ENCODE measurements at regions of chr7 and their contacts with region 1.

Region 1: GRCh38 chr7:30938435-30939316 is 25.1 kb upstream of the GHRHR start:
- DNase-seq: peak; percentile 32
- ATAC-seq: peak; percentile 93
- H3K4me3 ChIP-seq: no peak overlapping the region
- H3K27ac ChIP-seq: no peak overlapping the region
- H3K4me1 ChIP-seq: no peaks in the 10 kb centered on the region
- H3K27me3 ChIP-seq: no peaks in the 10 kb centered on the region; a peak in 1 of 4 replicates
- CTCF ChIP-seq: peak; percentile 92 to 99 (median 95); a peak in 5 of 6 replicates
- EP300 ChIP-seq: no peak
- POLR2A ChIP-seq: no peak
- RAD21 ChIP-seq: peak; percentile 46; the same call in 1 of the 2 replicates

Region 2: GRCh38 chr7:30800785-30801252 is 137.9 kb before region 1 on chr7:
- CTCF ChIA-PET with region 1: interaction called, 9 read pairs
- POLR2A ChIA-PET with region 1: no interaction called
- RAD21 ChIA-PET with region 1: interaction called, 3 read pairs
- SMC1A ChIA-PET with region 1: interaction called, 10 read pairs
- in situ Hi-C with region 1: no loop called
- intact Hi-C with region 1: no loop called
- DNase-seq: peak; percentile 21
- ATAC-seq: peak; percentile 77
- H3K4me3 ChIP-seq: no peak overlapping the region
- H3K27ac ChIP-seq: no peak overlapping the region
- H3K4me1 ChIP-seq: peaks cover 18% of the 10 kb centered on the region
- H3K27me3 ChIP-seq: no peaks in the 10 kb centered on the region
- CTCF ChIP-seq: peak; percentile 60 to 91 (median 73)
- EP300 ChIP-seq: no peak
- POLR2A ChIP-seq: no peak
- RAD21 ChIP-seq: peak; percentile 83

Region 3: DNA sequence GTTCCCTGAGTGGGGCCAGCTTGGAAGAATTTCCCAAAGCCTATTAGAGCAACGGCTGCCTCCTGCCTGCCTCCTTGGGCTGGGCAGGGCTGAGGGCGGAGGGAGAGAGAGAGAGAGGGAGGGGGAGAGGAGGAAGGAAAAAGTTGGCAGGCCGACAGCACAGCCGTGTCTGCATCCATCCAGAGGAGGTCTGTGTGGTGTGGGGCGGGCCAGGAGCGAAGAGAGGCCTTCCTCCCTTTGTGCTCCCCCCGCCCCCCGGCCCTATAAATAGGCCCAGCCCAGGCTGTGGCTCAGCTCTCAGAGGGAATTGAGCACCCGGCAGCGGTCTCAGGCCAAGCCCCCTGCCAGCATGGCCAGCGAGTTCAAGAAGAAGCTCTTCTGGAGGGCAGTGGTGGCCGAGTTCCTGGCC is 27.1 kb before region 1 on chr7 and contains the start of gene AQP1:
- CTCF ChIA-PET with region 1: no interaction called
- POLR2A ChIA-PET with region 1: no interaction called
- RAD21 ChIA-PET with region 1: no interaction called
- SMC1A ChIA-PET with region 1: no interaction called
- in situ Hi-C with region 1: no loop called
- intact Hi-C with region 1: no loop called
- DNase-seq: no peak
- ATAC-seq: no peak
- H3K4me3 ChIP-seq: no peak within 1 kb of the TSS
- H3K27ac ChIP-seq: no peak within 1 kb of the TSS
- H3K4me1 ChIP-seq: no peaks in the 10 kb centered on the region
- H3K27me3 ChIP-seq: no peaks in the 10 kb centered on the region
- CTCF ChIP-seq: no peak
- EP300 ChIP-seq: no peak
- POLR2A ChIP-seq: no peak
- RAD21 ChIP-seq: no peak
- polyA plus RNA-seq, gene AQP1: not detected

Region 4: GRCh38 chr7:30974605-30975255 is 36.1 kb after region 1 on chr7:
- CTCF ChIA-PET with region 1: interaction called, 159 read pairs
- POLR2A ChIA-PET with region 1: no interaction called
- RAD21 ChIA-PET with region 1: interaction called, 28 read pairs
- SMC1A ChIA-PET with region 1: interaction called, 49 read pairs
- in situ Hi-C with region 1: no loop called
- intact Hi-C with region 1: loop called (anchors 1 kb)
- DNase-seq: peak; percentile 60
- ATAC-seq: peak; percentile 96
- H3K4me3 ChIP-seq: no peak overlapping the region
- H3K27ac ChIP-seq: peak overlapping the region; percentile 19
- H3K4me1 ChIP-seq: peaks cover 13% of the 10 kb centered on the region
- H3K27me3 ChIP-seq: no peaks in the 10 kb centered on the region; a peak in 1 of 4 replicates
- CTCF ChIP-seq: peak; percentile 90 to 96 (median 93); a peak in 5 of 6 replicates
- EP300 ChIP-seq: peak; percentile 78; a peak in 2 of 4 replicates
- POLR2A ChIP-seq: no peak
- RAD21 ChIP-seq: peak; percentile 82

Region 5: GRCh38 chr7:31456646-31457368 is 518.1 kb after region 1 on chr7:
- CTCF ChIA-PET with region 1: no interaction called
- POLR2A ChIA-PET with region 1: no interaction called
- RAD21 ChIA-PET with region 1: no interaction called
- SMC1A ChIA-PET with region 1: no interaction called
- in situ Hi-C with region 1: no loop called
- intact Hi-C with region 1: no loop called
- DNase-seq: no peak
- ATAC-seq: no peak
- H3K4me3 ChIP-seq: no peak overlapping the region
- H3K27ac ChIP-seq: no peak overlapping the region
- H3K4me1 ChIP-seq: no peaks in the 10 kb centered on the region
- H3K27me3 ChIP-seq: no peaks in the 10 kb centered on the region; a peak in 2 of 4 replicates
- CTCF ChIP-seq: no peak
- EP300 ChIP-seq: no peak
- POLR2A ChIP-seq: no peak
- RAD21 ChIP-seq: no peak